Caco-2 (cell line): ENCODE measurements at regions of chr17 and their contacts with region 1.

Region 1: GRCh38 chr17:49496183-49496866 is 1.2 kb downstream of the NGFR start:
- DNase-seq: peak in 1 of 2 experiments; percentile 95
- H3K4me3 ChIP-seq: peak overlapping the region; percentile 34
- H3K4me3 Mint-ChIP-seq: peak overlapping the region; percentile 67
- H3K27ac Mint-ChIP-seq: no peak overlapping the region
- H3K4me1 ChIP-seq: peaks cover 27% of the 10 kb centered on the region
- H3K4me1 Mint-ChIP-seq: peaks cover 14% of the 10 kb centered on the region
- H3K27me3 ChIP-seq: peaks cover 29% of the 10 kb centered on the region
- H3K27me3 Mint-ChIP-seq: peaks cover 59% of the 10 kb centered on the region
- CTCF ChIP-seq: peak; percentile 87 to 99

Region 2: GRCh38 chr17:49285716-49286115 is 210.6 kb before region 1 on chr17:
- CTCF ChIA-PET with region 1: no interaction called
- POLR2A ChIA-PET with region 1: no interaction called
- intact Hi-C with region 1: no loop called
- DNase-seq: peak in 1 of 2 experiments; percentile 36
- H3K4me3 ChIP-seq: no peak overlapping the region
- H3K4me3 Mint-ChIP-seq: no peak overlapping the region
- H3K27ac Mint-ChIP-seq: no peak overlapping the region
- H3K4me1 ChIP-seq: no peaks in the 10 kb centered on the region
- H3K4me1 Mint-ChIP-seq: no peaks in the 10 kb centered on the region
- H3K27me3 ChIP-seq: no peaks in the 10 kb centered on the region
- H3K27me3 Mint-ChIP-seq: no peaks in the 10 kb centered on the region
- CTCF ChIP-seq: no peak

Region 3: GRCh38 chr17:49407981-49408501 is 88.3 kb before region 1 on chr17:
- CTCF ChIA-PET with region 1: interaction called, 16 read pairs
- POLR2A ChIA-PET with region 1: no interaction called
- intact Hi-C with region 1: loop called (anchors 2 kb)
- DNase-seq: peak; percentile 96 to 98
- H3K4me3 ChIP-seq: no peak overlapping the region
- H3K4me3 Mint-ChIP-seq: no peak overlapping the region
- H3K27ac Mint-ChIP-seq: peak overlapping the region; percentile 17
- H3K4me1 ChIP-seq: peaks cover 5% of the 10 kb centered on the region; the same call in 1 of the 2 replicates
- H3K4me1 Mint-ChIP-seq: peaks cover 10% of the 10 kb centered on the region
- H3K27me3 ChIP-seq: no peaks in the 10 kb centered on the region
- H3K27me3 Mint-ChIP-seq: no peaks in the 10 kb centered on the region
- CTCF ChIP-seq: peak; percentile 100

Region 4: GRCh38 chr17:49414622-49415350 is 81.5 kb before region 1 on chr17 and contains the start of gene PHB1:
- CTCF ChIA-PET with region 1: interaction called, 12 read pairs
- POLR2A ChIA-PET with region 1: no interaction called
- intact Hi-C with region 1: loop called (anchors 2 kb)
- DNase-seq: peak; percentile 100
- H3K4me3 ChIP-seq: peak within 1 kb of the TSS; percentile 61
- H3K4me3 Mint-ChIP-seq: peak within 1 kb of the TSS; percentile 88
- H3K27ac Mint-ChIP-seq: peak within 1 kb of the TSS; percentile 84
- H3K4me1 ChIP-seq: peaks cover 4% of the 10 kb centered on the region
- H3K4me1 Mint-ChIP-seq: no peaks in the 10 kb centered on the region
- H3K27me3 ChIP-seq: no peaks in the 10 kb centered on the region
- H3K27me3 Mint-ChIP-seq: no peaks in the 10 kb centered on the region
- CTCF ChIP-seq: no peak
- total RNA-seq, gene PHB1: 761 and 848 TPM in 2 replicates

Region 5: GRCh38 chr17:49486012-49486641 is 10.2 kb before region 1 on chr17:
- CTCF ChIA-PET with region 1: interaction called, 10 read pairs
- POLR2A ChIA-PET with region 1: no interaction called
- intact Hi-C with region 1: no loop called
- DNase-seq: no peak
- H3K4me3 ChIP-seq: no peak overlapping the region
- H3K4me3 Mint-ChIP-seq: no peak overlapping the region
- H3K27ac Mint-ChIP-seq: no peak overlapping the region
- H3K4me1 ChIP-seq: no peaks in the 10 kb centered on the region
- H3K4me1 Mint-ChIP-seq: no peaks in the 10 kb centered on the region
- H3K27me3 ChIP-seq: no peaks in the 10 kb centered on the region; the same call in 1 of the 2 replicates
- H3K27me3 Mint-ChIP-seq: peaks cover 43% of the 10 kb centered on the region
- CTCF ChIP-seq: no peak

Region 6: GRCh38 chr17:49508061-49508865 is 11.9 kb after region 1 on chr17:
- CTCF ChIA-PET with region 1: interaction called, 11 read pairs
- POLR2A ChIA-PET with region 1: no interaction called
- intact Hi-C with region 1: no loop called
- DNase-seq: peak; percentile 88 to 92
- H3K4me3 ChIP-seq: no peak overlapping the region
- H3K4me3 Mint-ChIP-seq: peak overlapping the region; percentile 40
- H3K27ac Mint-ChIP-seq: peak overlapping the region; percentile 53
- H3K4me1 ChIP-seq: peaks cover 21% of the 10 kb centered on the region
- H3K4me1 Mint-ChIP-seq: peaks cover 22% of the 10 kb centered on the region
- H3K27me3 ChIP-seq: no peaks in the 10 kb centered on the region
- H3K27me3 Mint-ChIP-seq: peaks cover 5% of the 10 kb centered on the region
- CTCF ChIP-seq: no peak

Region 7: GRCh38 chr17:49515196-49515770 is 19.0 kb after region 1 on chr17:
- CTCF ChIA-PET with region 1: interaction called, 17 read pairs
- POLR2A ChIA-PET with region 1: no interaction called
- intact Hi-C with region 1: no loop called
- DNase-seq: peak; percentile 62 to 63
- H3K4me3 ChIP-seq: no peak overlapping the region
- H3K4me3 Mint-ChIP-seq: no peak overlapping the region
- H3K27ac Mint-ChIP-seq: peak overlapping the region; percentile 5
- H3K4me1 ChIP-seq: no peaks in the 10 kb centered on the region
- H3K4me1 Mint-ChIP-seq: peaks cover 20% of the 10 kb centered on the region
- H3K27me3 ChIP-seq: no peaks in the 10 kb centered on the region
- H3K27me3 Mint-ChIP-seq: peaks cover 8% of the 10 kb centered on the region
- CTCF ChIP-seq: no peak

Region 8: DNA sequence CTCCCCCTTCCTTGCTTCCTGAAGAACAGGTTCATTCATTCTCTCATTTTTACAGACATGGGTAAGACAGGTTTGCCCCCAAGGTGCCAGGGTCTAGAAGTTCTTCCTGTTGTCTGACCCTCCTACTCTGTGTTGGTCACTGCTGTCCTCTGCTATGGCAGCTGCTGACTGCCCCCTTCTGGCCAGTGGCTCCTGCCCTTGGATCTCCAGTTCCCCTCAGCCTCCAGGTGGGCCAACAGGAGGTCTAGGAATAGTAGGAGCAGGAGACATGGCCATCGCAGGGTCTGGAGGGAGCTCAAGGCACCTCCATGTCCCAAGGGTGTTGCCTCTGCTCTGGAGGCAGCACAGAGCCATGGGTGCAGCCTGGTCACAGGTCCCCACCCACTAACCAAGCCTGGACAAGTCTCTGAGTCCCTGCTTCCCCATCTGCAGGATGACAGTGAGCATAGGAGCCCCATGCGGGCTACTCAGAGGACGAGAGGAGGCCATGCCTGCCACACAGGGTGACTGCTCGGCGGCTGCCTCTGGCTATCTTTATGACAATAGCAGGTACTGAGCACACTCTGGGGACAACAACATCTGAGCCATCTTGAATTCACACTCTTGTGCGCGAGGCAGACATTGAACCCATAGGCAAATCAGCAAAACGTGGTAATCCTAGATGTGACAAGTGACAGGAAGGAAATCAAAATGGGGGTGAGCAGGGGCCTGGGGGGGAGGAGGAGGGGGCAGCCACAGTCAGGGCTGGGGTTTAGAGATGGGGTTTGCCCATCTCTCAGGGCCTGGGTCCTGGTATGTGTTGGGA is 52.4 kb after region 1 on chr17:
- CTCF ChIA-PET with region 1: interaction called, 18 read pairs
- POLR2A ChIA-PET with region 1: no interaction called
- intact Hi-C with region 1: loop called (anchors 2 kb)
- DNase-seq: peak; percentile 75 to 77
- H3K4me3 ChIP-seq: no peak overlapping the region
- H3K4me3 Mint-ChIP-seq: no peak overlapping the region
- H3K27ac Mint-ChIP-seq: no peak overlapping the region
- H3K4me1 ChIP-seq: peaks cover 5% of the 10 kb centered on the region; the same call in 1 of the 2 replicates
- H3K4me1 Mint-ChIP-seq: peaks cover 9% of the 10 kb centered on the region
- H3K27me3 ChIP-seq: no peaks in the 10 kb centered on the region
- H3K27me3 Mint-ChIP-seq: no peaks in the 10 kb centered on the region
- CTCF ChIP-seq: peak; percentile 82 to 93